ENCODE measurements at regions of chr15 and their contacts with region 1.

Region 1: DNA sequence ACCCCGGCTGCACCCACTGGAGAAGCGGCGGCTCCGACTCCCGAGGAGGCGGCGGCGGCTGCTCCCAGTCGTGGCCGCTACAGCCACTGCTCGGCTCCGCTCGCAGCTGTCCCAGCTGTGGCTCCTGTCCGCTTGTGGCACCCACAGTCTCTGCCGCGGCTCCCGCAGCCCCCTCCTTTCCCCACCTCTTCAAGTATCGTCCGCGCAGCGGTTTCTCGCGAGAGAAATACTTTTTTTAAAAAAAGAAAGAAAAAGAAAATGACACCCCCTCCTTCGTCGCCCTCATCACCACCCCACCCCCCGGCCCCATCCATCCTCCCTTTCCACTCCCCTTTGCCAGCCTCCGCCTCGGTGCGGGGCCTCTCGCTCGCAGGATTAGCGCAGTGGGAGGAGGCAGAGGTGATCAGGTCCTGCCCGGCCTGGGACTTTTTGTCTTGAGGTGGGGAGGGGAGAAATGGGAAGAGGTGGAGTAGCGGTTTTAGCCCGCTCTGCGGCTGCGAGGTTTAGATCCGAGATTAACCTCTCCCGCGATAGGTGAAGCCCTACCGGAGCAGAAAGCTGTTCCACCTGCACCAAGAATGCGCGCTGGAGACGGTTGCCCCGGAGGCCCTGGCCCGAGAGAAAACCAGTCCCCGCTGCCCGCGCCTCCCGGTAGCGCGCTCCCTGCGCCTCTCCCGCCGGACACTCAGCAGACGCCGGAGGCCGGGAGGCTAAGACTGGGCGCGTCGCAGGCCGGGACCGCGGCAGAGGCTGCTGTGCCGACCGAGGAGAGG is at the start of gene FBN1:
- DNase-seq: peak; percentile 69
- H3K4me3 ChIP-seq: peak within 1 kb of the TSS; percentile 88
- CTCF ChIP-seq: no peak

Region 2: DNA sequence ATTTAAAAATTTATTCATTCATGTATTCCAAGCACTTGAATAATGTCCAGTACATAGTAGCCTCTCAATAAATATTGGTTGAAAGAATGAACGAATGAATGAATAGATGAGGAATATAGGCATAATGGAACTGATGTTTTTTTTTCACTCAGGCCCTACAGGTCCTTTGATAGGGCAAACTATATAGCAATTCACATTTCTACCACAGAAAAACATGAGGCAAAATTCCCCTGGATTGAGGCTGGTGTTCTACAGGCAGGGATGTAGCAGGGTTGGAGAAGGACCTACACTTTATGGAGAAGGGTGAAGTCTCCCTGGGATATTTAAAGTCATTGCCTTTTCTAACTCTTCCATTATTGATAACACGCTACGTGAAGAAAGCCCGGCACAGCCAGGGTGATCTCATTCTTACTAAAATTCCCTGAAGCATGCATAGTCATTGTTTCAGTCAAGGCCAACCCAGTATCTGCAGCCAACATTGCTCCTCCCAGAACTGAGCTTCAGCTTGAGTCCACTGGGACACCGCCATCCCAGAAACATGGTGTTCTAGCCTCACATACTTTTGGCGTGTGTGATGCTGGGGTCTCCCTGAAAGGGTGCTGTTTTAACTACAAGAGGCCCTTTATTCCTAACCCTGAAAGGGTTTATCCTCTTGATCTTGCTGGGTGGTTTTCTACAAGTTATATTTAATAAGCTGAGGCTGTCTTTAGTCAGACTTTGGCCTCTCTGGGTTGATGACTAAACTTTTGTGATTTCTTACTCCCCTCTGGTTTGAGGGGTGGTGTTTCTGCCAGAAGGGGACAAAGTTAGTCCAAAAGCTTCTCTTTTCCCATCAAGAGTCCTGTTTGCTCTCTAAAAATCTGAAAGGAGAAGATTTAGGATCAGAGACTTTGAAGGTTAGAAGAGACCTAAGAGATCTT is 25.6 kb after region 1 on chr15:
- CTCF ChIA-PET with region 1: interaction called, 17 read pairs
- POLR2A ChIA-PET with region 1: interaction called, 6 read pairs
- DNase-seq: no peak
- H3K4me3 ChIP-seq: no peak overlapping the region
- CTCF ChIP-seq: no peak

Region 3: DNA sequence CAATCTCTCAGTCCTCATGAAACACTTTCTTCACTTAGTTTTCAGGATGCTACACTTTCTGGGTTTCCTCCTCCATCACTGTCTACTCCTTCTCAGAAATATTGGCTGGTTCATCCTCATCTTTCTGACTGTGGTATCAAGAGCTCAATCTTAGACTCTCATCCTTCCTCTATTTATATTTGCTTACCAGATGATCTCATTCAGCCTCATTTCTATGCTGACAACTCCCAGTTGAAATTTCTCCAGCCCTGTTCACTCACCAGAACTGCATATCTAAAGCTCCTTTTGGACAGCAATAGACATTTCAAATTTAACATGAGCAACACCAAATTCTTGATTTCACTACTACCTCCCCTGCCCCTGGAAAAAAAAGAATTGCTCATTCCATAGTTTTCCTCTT is 47.7 kb after region 1 on chr15:
- CTCF ChIA-PET with region 1: interaction called, 3 read pairs
- POLR2A ChIA-PET with region 1: interaction called, 29 read pairs
- DNase-seq: peak; percentile 53
- H3K4me3 ChIP-seq: no peak overlapping the region
- CTCF ChIP-seq: no peak

Region 4: DNA sequence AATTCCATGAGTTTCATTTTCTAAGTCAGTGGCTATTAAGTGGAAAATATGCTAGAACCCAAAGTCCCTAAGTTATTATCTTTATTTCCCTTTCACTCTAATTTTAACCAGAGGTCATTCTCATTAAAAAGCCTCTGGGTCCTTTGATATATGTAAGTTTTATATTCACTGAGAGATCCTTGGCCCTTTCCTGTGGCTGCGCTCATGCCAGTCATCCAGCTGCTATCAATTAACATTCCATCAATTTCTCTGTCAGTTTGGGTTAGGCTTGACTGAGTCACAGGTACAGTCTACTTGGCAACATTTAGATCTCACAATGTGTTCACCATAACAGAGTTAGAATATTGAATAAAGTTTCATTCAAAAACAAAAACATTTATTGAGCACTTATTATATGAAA is 57.8 kb after region 1 on chr15:
- CTCF ChIA-PET with region 1: no interaction called
- POLR2A ChIA-PET with region 1: interaction called, 11 read pairs
- DNase-seq: peak; percentile 44
- H3K4me3 ChIP-seq: no peak overlapping the region
- CTCF ChIP-seq: no peak

Measured in AG04449 (cell line).